IMR-90 (cell line): ENCODE measurements at regions of chr12 and their contacts with region 1.

Region 1: GRCh38 chr12:5988659-5989116 is 43.6 kb upstream of the ANO2 start:
- DNase-seq: peak; percentile 71
- ATAC-seq: peak; percentile 100
- H3K4me3 ChIP-seq: no peak overlapping the region
- H3K27ac ChIP-seq: no peak overlapping the region
- H3K4me1 ChIP-seq: no peaks in the 10 kb centered on the region
- H3K27me3 ChIP-seq: peaks cover 13% of the 10 kb centered on the region
- CTCF ChIP-seq: peak; percentile 98
- POLR2A ChIP-seq: no peak; the same call in 1 of the 2 replicates
- RAD21 ChIP-seq: peak; percentile 99

Region 2: GRCh38 chr12:5716231-5716630 is 272.5 kb before region 1 on chr12:
- CTCF ChIA-PET with region 1: no interaction called
- POLR2A ChIA-PET with region 1: no interaction called
- dilution Hi-C with region 1: no loop called
- in situ Hi-C with region 1: no loop called
- intact Hi-C with region 1: no loop called
- DNase-seq: peak; percentile 43
- ATAC-seq: peak; percentile 49
- H3K4me3 ChIP-seq: no peak overlapping the region
- H3K27ac ChIP-seq: no peak overlapping the region
- H3K4me1 ChIP-seq: no peaks in the 10 kb centered on the region
- H3K27me3 ChIP-seq: peaks cover 47% of the 10 kb centered on the region
- CTCF ChIP-seq: no peak
- POLR2A ChIP-seq: no peak
- RAD21 ChIP-seq: no peak

Region 3: DNA sequence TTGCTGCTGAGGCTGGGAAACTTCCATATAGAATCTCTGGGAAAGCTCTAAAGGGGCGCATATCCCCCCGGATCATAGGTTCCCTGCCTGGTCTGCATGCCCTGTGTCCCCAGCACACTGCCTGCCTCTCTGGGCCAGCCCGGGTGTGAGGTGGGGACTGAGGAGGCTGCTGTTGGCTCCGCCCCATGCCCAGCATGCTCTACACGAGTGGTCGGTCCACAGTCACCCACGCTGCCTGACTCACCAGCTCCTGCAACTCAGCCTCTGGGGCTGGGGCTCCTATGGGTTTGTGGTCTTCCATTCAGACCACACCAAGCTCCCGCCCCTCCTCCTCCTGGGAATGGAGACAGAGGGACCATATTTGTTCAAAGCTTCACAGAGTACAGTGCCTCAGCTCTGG is 44.9 kb after region 1 on chr12:
- CTCF ChIA-PET with region 1: interaction called, 46 read pairs
- POLR2A ChIA-PET with region 1: no interaction called
- dilution Hi-C with region 1: no loop called
- in situ Hi-C with region 1: loop called (anchors 5 kb)
- intact Hi-C with region 1: no loop called
- DNase-seq: no peak
- ATAC-seq: no peak
- H3K4me3 ChIP-seq: no peak overlapping the region
- H3K27ac ChIP-seq: no peak overlapping the region
- H3K4me1 ChIP-seq: no peaks in the 10 kb centered on the region
- H3K27me3 ChIP-seq: peaks cover 7% of the 10 kb centered on the region; the same call in 1 of the 2 replicates
- CTCF ChIP-seq: no peak
- POLR2A ChIP-seq: no peak
- RAD21 ChIP-seq: no peak

Region 4: DNA sequence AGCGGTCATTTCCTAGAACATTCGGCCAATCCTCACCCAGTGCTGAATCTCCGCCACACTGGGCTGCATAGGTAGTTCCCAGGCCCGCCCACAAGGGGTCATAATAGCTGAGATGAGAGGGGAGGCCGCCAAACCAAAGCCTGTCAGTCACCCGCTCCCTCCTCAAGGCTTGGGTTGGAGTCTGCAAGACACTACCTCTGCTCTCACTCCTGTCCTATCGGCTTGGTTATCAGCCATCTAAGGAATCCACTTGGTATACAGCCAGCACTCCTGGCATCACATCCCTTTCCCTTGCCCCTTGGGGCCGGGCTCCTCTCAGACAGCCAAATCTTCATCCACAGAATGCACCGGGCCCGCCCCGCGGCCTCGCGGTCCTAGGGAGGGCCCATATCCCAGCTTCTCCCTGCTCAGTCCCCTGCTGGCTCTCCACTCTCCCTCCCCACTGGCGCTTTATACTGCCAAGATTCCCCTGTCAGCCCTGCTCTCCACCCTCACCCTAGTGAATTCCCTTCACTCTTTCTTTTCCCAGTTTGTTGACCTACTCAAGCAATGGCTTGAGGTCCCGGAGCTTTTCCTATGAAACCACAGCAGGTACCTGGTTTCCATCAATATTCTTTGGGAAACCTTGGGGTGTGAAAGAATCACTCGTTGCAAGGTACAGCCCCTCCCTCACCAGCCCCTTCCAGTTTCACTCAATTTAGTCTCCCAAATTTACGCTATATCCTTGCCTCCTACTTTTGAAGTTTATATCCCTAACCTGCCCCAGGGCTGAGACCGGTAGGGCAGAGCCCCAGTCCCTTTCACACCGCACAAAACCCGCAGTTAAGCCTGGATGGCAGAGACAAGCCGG is 565.7 kb after region 1 on chr12:
- CTCF ChIA-PET with region 1: no interaction called
- POLR2A ChIA-PET with region 1: no interaction called
- dilution Hi-C with region 1: no loop called
- in situ Hi-C with region 1: no loop called
- intact Hi-C with region 1: loop called (anchors 10 kb)
- DNase-seq: peak; percentile 72
- ATAC-seq: peak; percentile 40
- H3K4me3 ChIP-seq: peak overlapping the region; percentile 82
- H3K27ac ChIP-seq: peak overlapping the region; percentile 46
- H3K4me1 ChIP-seq: peaks cover 40% of the 10 kb centered on the region
- H3K27me3 ChIP-seq: no peaks in the 10 kb centered on the region
- CTCF ChIP-seq: peak; percentile 60
- POLR2A ChIP-seq: no peak
- RAD21 ChIP-seq: peak; percentile 43